Activated CD4-positive, alpha-beta T cell treated with anti-CD3 and anti-CD28 coated beads, Interleukin-2, amount 10 ng/mL, durations not matched to agents 24 days and 14 days (primary cell): ENCODE measurements at regions of chr11 and their contacts with region 1.

Region 1: GRCh38 chr11:74748211-74749127 is at the start of gene RNF169:
- DNase-seq: peak; percentile 96
- H3K4me3 Mint-ChIP-seq: peak within 1 kb of the TSS; percentile 98
- H3K27ac Mint-ChIP-seq: peak within 1 kb of the TSS; percentile 89
- H3K4me1 Mint-ChIP-seq: peaks cover 31% of the 10 kb centered on the region
- H3K27me3 Mint-ChIP-seq: no peaks in the 10 kb centered on the region
- total RNA-seq, gene RNF169: 15.2 TPM in 2 replicates

Region 2: GRCh38 chr11:74398244-74399159 is 350.0 kb before region 1 on chr11 and contains the start of gene PGM2L1:
- intact Hi-C with region 1: loop called (anchors 1 kb)
- DNase-seq: peak; percentile 97
- H3K4me3 Mint-ChIP-seq: peak within 1 kb of the TSS; percentile 97
- H3K27ac Mint-ChIP-seq: peak within 1 kb of the TSS; percentile 100
- H3K4me1 Mint-ChIP-seq: peaks cover 24% of the 10 kb centered on the region
- H3K27me3 Mint-ChIP-seq: no peaks in the 10 kb centered on the region
- total RNA-seq, gene PGM2L1: 4.7 and 4.9 TPM in 2 replicates

Region 3: GRCh38 chr11:74492974-74493790 is 255.3 kb before region 1 on chr11 and contains the start of gene LIPT2:
- intact Hi-C with region 1: loop called (anchors 1 kb)
- DNase-seq: peak; percentile 99
- H3K4me3 Mint-ChIP-seq: peak within 1 kb of the TSS; percentile 86
- H3K27ac Mint-ChIP-seq: peak within 1 kb of the TSS; percentile 80
- H3K4me1 Mint-ChIP-seq: peaks cover 15% of the 10 kb centered on the region
- H3K27me3 Mint-ChIP-seq: peaks cover 1% of the 10 kb centered on the region
- total RNA-seq, gene LIPT2: 3.1 and 4.7 TPM in 2 replicates

Region 4: GRCh38 chr11:74592441-74593362 is 155.8 kb before region 1 on chr11 and contains the start of gene POLD3:
- intact Hi-C with region 1: loop called (anchors 1 kb)
- DNase-seq: peak; percentile 98
- H3K4me3 Mint-ChIP-seq: peak within 1 kb of the TSS; percentile 96
- H3K27ac Mint-ChIP-seq: peak within 1 kb of the TSS; percentile 90
- H3K4me1 Mint-ChIP-seq: peaks cover 19% of the 10 kb centered on the region
- H3K27me3 Mint-ChIP-seq: peaks cover 6% of the 10 kb centered on the region
- total RNA-seq, gene POLD3: 53.5 and 53.6 TPM in 2 replicates

Region 5: DNA sequence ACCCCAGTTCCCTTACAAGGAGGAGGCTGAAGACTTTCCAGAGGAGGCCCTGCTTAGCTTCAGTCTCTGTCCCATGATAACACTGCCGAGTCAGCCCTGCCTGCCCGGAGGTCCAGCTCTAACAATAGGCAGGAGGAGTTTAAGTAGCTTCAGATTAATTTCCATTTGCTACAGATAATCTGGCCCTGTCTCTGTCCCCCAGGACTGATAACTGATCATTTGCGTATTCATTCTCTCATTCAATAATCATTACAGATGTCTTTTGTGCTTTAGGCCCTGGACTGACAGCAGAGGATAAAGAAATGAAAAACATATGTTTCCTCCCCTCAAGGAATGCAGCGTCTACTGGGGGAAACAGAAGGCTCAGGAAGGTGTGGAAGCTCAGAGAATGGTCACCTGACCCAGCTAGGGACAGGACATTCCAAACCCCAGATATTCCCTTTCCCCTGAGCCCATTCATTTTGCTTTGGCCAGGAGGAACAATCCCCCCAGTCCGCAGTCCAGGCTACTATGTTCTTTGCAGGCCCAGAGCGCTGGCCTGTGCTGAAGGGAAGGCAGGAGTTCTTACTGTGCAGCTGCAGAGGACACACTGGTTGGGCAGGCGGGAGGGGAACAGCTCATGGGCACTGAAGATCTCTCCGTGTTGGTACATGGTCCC is 38.1 kb before region 1 on chr11:
- intact Hi-C with region 1: no loop called
- DNase-seq: no peak
- H3K4me3 Mint-ChIP-seq: no peak overlapping the region
- H3K27ac Mint-ChIP-seq: no peak overlapping the region
- H3K4me1 Mint-ChIP-seq: peaks cover 2% of the 10 kb centered on the region
- H3K27me3 Mint-ChIP-seq: no peaks in the 10 kb centered on the region

Region 6: DNA sequence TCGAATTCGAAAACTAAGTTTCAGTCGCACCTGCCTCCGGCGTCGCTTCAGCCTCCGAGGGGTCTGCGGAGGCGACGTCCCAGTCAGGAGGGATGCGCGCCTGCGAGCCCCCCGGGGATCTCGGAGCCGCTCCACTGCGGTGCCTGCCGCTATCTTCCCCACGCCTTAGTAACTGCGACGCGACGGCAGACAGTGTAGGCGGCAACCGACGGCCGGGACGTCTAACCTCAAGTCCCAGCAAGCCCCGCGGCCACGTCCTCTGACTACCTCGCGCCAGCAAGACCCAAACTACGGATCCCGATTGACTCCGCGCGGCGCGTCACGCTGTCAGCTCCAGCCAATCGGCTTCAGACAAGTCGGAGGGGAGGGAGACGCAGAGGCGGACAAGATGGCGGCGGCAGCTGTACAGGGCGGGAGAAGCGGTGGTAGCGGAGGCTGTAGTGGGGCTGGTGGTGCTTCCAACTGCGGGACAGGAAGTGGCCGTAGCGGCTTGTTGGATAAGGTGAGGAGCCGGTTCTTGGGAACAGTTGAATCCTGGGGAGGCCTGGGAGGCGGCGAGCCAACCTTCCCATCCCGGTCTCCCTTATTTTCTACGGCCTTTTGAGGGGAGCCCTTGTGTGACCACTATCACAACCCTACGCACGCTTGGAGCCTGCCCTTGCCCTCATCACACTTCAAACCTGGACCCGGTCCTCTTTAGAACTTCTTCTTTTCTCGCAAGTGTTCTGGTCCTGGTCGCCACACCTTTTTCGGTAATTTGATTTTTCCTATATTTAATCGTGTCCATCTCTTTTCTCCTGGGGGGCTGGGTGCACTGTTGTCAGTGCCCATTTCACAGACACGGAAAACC is 200.7 kb after region 1 on chr11 and contains the starts of genes SPCS2 and XRRA1:
- intact Hi-C with region 1: loop called (anchors 2 kb)
- DNase-seq: peak; percentile 99
- H3K4me3 Mint-ChIP-seq: peak within 1 kb of the TSS; percentile 91
- H3K27ac Mint-ChIP-seq: peak within 1 kb of the TSS; percentile 89
- H3K4me1 Mint-ChIP-seq: peaks cover 37% of the 10 kb centered on the region
- H3K27me3 Mint-ChIP-seq: no peaks in the 10 kb centered on the region
- total RNA-seq, gene SPCS2: 154 and 169 TPM in 2 replicates
- total RNA-seq, gene XRRA1: 11.0 and 11.4 TPM in 2 replicates